Panc1 (cell line): ENCODE measurements at regions of chr6 and their contacts with region 1.

Region 1: GRCh38 chr6:69818223-69818930 is 21.6 kb upstream of the LMBRD1 start:
- DNase-seq: no peak
- ATAC-seq: no peak
- H3K4me3 ChIP-seq: no peak overlapping the region
- H3K27ac ChIP-seq: no peak overlapping the region
- H3K4me1 ChIP-seq: no peaks in the 10 kb centered on the region
- H3K27me3 ChIP-seq: peaks cover 3% of the 10 kb centered on the region; the same call in 1 of the 2 replicates
- CTCF ChIP-seq: no peak

Region 2: GRCh38 chr6:69072796-69073195 is 745.6 kb before region 1 on chr6:
- CTCF ChIA-PET with region 1: interaction called, 14 read pairs
- POLR2A ChIA-PET with region 1: no interaction called
- in situ Hi-C with region 1: no loop called
- intact Hi-C with region 1: no loop called
- DNase-seq: no peak
- ATAC-seq: no peak
- H3K4me3 ChIP-seq: no peak overlapping the region
- H3K27ac ChIP-seq: no peak overlapping the region
- H3K4me1 ChIP-seq: no peaks in the 10 kb centered on the region
- H3K27me3 ChIP-seq: no peaks in the 10 kb centered on the region
- CTCF ChIP-seq: no peak

Region 3: DNA sequence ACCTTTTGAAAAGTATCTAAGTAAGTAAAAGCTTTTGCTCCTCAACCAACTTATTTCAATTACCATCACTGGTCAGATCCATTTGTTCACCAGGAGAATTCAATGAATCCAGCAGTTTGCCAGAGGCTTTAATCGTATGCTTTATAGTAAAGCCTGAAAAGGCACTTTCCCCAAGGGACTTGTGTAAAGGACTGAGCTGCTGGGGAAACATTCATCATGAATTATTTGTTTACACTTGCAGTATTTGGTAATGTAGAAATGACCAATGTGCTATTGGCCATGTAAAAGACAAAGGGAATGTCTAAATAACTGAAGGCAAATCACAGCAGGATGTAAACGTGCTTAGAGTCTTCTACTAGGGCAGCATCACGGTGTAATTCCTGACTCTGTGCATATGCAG is 711.9 kb before region 1 on chr6:
- CTCF ChIA-PET with region 1: no interaction called
- POLR2A ChIA-PET with region 1: no interaction called
- in situ Hi-C with region 1: no loop called
- intact Hi-C with region 1: no loop called
- DNase-seq: no peak
- ATAC-seq: no peak
- H3K4me3 ChIP-seq: no peak overlapping the region
- H3K27ac ChIP-seq: no peak overlapping the region
- H3K4me1 ChIP-seq: no peaks in the 10 kb centered on the region
- H3K27me3 ChIP-seq: no peaks in the 10 kb centered on the region
- CTCF ChIP-seq: no peak